ENCODE measurements at regions of chr11 and their contacts with region 1.

Region 1: DNA sequence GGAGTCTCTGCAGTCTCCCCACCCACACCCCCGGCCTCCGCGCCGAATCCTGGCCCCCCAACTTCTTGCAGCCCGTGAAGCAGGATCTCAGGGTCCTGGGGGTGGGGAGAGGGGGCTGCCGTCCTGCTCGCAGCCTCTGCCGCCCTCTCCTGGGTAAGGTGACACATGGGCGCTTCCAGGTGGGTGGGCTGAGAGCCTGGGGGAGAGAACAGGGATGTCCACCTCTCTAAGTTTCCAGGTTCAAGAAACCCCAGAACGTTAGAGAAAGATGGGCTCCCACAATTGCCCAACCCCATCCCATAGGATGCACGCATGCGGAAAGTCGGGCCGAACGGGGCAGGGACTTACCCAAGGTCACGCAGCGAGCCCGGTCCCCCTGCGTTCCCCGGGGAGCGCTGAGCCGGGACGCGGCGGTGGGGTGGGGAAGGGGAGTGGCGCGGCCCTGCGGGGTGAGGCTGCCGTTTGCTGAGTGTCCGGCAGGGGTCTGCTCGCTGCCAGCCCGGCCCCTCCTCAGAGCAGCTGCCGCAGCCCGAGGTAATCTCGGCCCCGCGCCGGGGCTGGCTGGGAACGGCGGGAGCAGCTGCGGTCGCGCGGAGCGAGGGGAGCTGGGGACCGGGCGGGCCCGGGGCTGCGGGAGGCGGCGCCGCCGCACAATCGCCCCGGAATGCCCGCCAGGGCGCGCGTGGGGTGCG is 705 bp upstream of the CAPN1 start:
- DNase-seq: peak; percentile 77
- ATAC-seq: peak; percentile 82
- H3K4me3 Mint-ChIP-seq: peak overlapping the region; percentile 92
- H3K27ac Mint-ChIP-seq: peak overlapping the region; percentile 92
- H3K4me1 Mint-ChIP-seq: peaks cover 21% of the 10 kb centered on the region
- H3K27me3 Mint-ChIP-seq: no peaks in the 10 kb centered on the region
- CTCF ChIP-seq: no peak

Region 2: GRCh38 chr11:65194564-65194963 is 13.5 kb after region 1 on chr11:
- CTCF ChIA-PET with region 1: interaction called, 4 read pairs
- POLR2A ChIA-PET with region 1: interaction called, 10 read pairs
- intact Hi-C with region 1: no loop called
- DNase-seq: no peak
- ATAC-seq: no peak
- H3K4me3 Mint-ChIP-seq: no peak overlapping the region
- H3K27ac Mint-ChIP-seq: no peak overlapping the region
- H3K4me1 Mint-ChIP-seq: peaks cover 2% of the 10 kb centered on the region
- H3K27me3 Mint-ChIP-seq: no peaks in the 10 kb centered on the region
- CTCF ChIP-seq: no peak

Region 3: DNA sequence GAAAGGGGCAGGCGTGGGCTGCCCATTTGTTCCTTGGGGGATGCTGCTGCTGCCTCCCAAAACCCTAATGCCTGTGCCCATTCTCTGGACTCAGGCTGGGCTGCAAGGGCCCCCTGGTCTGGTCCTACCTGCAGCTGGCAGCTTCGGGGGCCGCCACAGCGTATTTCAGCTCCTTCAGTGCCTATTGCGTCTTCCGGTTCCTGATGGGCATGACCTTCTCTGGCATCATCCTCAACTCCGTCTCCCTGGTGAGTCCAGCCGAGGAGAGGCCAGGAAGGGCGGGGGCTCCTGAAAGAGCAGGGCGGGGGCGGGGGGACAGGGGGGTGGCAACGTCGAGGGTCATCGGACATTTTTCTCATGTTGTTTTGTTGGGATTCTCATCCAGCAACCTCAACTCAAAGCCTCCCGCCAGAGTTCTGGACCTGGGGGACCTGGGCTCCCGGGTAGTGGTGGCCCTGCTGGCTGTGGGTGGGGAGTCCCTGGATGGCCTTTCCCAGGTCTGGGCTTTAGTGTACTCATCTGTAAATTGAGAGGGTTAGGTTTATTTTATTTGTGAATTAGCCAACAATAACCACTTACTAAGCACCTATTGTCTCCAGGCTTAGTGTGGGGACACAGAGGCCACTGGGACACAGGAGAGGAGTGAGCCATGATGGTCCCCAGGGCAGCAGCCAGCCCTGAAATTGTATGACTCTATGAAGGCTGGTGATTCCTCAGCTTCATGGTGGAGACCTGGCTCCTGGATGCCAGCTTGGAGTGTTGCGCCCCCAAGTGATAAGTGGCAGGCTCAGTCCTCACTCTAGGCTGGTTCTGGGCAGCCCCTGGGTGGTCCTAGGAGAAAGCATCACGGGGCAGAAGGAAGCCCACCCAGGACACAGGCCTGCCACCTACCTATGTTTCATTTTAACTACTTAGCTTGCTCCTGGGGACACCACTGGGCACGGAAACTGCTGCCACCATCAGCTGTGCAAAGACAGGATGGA is 36.7 kb after region 1 on chr11:
- CTCF ChIA-PET with region 1: no interaction called
- POLR2A ChIA-PET with region 1: no interaction called
- intact Hi-C with region 1: no loop called
- DNase-seq: no peak
- ATAC-seq: no peak
- H3K4me3 Mint-ChIP-seq: no peak overlapping the region
- H3K27ac Mint-ChIP-seq: no peak overlapping the region
- H3K4me1 Mint-ChIP-seq: peaks cover 8% of the 10 kb centered on the region
- H3K27me3 Mint-ChIP-seq: no peaks in the 10 kb centered on the region
- CTCF ChIP-seq: no peak

Region 4: DNA sequence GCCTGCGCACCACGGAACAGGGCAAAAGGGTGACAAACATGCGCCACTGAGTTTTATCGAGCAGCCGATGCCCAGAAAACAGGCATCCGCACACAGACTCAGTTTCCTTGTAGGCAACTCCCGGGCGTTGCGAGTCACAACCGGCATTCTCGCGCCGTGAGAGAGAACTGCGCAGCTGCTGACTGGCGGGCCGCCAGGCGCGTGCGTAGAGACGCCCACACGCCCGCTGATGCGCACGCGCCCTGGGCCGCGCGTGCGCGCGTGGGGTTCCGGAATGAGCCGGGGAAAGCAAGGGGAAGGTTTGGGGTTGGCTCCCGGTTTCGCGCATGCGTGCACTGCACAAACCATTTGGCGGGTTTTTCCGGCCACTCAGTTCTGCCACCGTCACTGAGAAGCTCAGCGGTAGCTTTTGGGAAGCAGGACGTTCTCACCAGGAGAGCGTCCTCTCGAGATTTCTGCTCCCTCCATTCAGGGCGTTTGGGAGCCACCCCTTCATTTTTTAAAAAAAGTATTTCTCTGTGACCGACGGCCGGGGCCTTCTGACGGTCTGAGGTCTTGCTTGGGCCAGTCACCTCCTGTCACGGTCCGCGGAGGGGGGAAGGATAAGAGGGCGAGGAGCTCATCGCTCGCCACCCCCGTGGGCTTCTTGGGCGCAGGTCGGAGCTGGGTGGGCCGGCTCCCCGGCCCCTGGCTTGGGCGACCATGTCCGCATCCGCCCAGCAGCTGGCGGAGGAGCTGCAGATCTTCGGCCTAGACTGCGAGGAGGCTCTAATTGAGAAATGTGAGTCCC is 80.8 kb after region 1 on chr11 and contains the start of gene POLA2:
- CTCF ChIA-PET with region 1: no interaction called
- POLR2A ChIA-PET with region 1: interaction called, 11 read pairs
- intact Hi-C with region 1: loop called (anchors 5 kb)
- DNase-seq: peak; percentile 98
- ATAC-seq: peak; percentile 83
- H3K4me3 Mint-ChIP-seq: peak within 1 kb of the TSS; percentile 90
- H3K27ac Mint-ChIP-seq: peak within 1 kb of the TSS; percentile 91
- H3K4me1 Mint-ChIP-seq: peaks cover 27% of the 10 kb centered on the region
- H3K27me3 Mint-ChIP-seq: no peaks in the 10 kb centered on the region
- CTCF ChIP-seq: no peak
- total RNA-seq, gene POLA2: 37.1 and 43.4 TPM in 2 replicates

Region 5: DNA sequence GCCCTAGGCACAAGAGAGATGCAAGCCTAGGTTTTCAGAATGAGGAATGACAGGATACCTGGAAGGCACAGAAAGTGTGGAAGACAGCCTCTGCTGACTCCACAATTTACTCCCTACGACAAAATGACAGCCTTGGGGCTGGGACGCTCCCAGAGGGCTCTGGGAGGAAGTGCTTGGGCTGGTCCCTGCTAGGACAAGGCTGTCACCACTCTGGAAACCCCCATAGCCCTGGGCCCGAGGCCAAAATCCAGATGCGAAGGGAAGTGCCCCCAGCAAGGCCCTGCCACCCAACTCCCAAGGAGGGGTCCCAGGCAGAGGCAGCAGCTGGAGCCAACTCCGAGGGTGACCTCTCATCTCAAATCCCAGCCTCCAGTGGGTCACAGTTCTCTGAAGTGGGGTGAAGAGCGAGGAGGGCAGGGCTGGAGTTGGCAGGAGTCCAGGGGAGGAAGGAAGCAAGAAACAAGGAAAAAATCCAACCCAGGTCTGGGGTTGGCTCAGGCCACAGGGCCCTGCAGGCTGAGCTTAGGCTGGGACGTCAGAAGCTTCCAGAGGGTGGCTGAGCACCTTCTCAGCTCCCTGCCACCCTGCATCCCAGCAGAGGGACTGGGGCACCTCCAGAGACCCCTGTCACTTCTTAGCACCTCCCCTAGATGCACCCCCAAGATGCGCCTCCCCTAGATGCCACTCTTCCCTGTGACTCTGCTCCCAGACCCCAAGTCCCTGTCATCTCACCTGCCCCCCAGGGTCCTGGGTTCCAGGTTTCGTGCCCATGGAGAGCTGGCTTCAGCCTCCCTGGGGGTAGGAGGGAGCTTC is 127.5 kb after region 1 on chr11:
- CTCF ChIA-PET with region 1: no interaction called
- POLR2A ChIA-PET with region 1: no interaction called
- intact Hi-C with region 1: no loop called
- DNase-seq: no peak
- ATAC-seq: no peak
- H3K4me3 Mint-ChIP-seq: no peak overlapping the region
- H3K27ac Mint-ChIP-seq: no peak overlapping the region
- H3K4me1 Mint-ChIP-seq: no peaks in the 10 kb centered on the region
- H3K27me3 Mint-ChIP-seq: peaks cover 3% of the 10 kb centered on the region
- CTCF ChIP-seq: no peak

Region 6: GRCh38 chr11:65524741-65525545 is 343.9 kb after region 1 on chr11 and contains the start of gene SCYL1:
- CTCF ChIA-PET with region 1: no interaction called
- POLR2A ChIA-PET with region 1: no interaction called
- intact Hi-C with region 1: no loop called
- DNase-seq: peak; percentile 78
- ATAC-seq: peak; percentile 95
- H3K4me3 Mint-ChIP-seq: peak within 1 kb of the TSS; percentile 81
- H3K27ac Mint-ChIP-seq: peak within 1 kb of the TSS; percentile 66
- H3K4me1 Mint-ChIP-seq: peaks cover 47% of the 10 kb centered on the region
- H3K27me3 Mint-ChIP-seq: no peaks in the 10 kb centered on the region
- CTCF ChIP-seq: no peak
- total RNA-seq, gene SCYL1: 70.0 and 75.7 TPM in 2 replicates

Measured in activated B cell treated with CpG ODN at 0.5 μM for 24 hours (primary cell).